GM23248 (cell line): ENCODE measurements at regions of chr17 and their contacts with region 1.

Region 1: GRCh38 chr17:76868176-76868668 is at the start of gene MGAT5B:
- DNase-seq: peak; percentile 91
- H3K4me3 ChIP-seq: no peak within 1 kb of the TSS
- H3K27ac ChIP-seq: no peak within 1 kb of the TSS
- H3K4me1 ChIP-seq: peaks cover 25% of the 10 kb centered on the region
- H3K27me3 ChIP-seq: peaks cover 24% of the 10 kb centered on the region; the same call in 1 of the 2 replicates
- total RNA-seq, gene MGAT5B: 0.11 TPM in 1 of 2 replicates, not detected in the other

Region 2: DNA sequence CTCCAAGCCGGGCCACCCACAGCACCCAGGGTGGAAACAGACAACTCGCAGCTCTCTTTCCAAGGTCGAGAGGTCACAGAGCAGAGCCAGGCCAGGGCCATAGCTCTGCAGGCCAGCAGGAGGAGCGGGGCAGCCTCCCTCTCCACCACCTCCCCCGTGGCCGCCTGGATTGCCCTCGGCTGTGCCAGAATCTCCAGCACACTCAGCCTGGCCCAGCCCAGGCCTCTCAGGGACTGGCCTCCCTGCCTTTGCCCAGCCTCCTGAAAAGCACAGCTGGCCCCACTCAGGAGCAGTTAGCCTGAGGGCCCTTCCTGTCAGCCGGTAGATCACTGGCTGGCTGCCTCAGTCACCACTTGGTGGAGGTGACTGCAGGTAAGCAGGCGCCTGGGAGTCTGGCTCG is 186.7 kb after region 1 on chr17:
- in situ Hi-C with region 1: loop called (anchors 10 kb)
- DNase-seq: no peak
- H3K4me3 ChIP-seq: no peak overlapping the region
- H3K27ac ChIP-seq: no peak overlapping the region
- H3K4me1 ChIP-seq: no peaks in the 10 kb centered on the region
- H3K27me3 ChIP-seq: peaks cover 54% of the 10 kb centered on the region